Activated CD8-positive, alpha-beta T cell treated with anti-CD3 and anti-CD28 coated beads for 36 hours (primary cell): ENCODE measurements at regions of chr4 and their contacts with region 1.

Region 1: GRCh38 chr4:109433205-109434006 is at the start of gene SEC24B:
- DNase-seq: peak; percentile 92
- ATAC-seq: peak; percentile 87
- H3K4me3 Mint-ChIP-seq: peak within 1 kb of the TSS; percentile 87
- H3K27ac Mint-ChIP-seq: peak within 1 kb of the TSS; percentile 92
- H3K4me1 Mint-ChIP-seq: peaks cover 53% of the 10 kb centered on the region
- H3K27me3 Mint-ChIP-seq: no peaks in the 10 kb centered on the region
- CTCF ChIP-seq: peak; percentile 92
- total RNA-seq, gene SEC24B: 25.8 to 26.0 TPM

Region 2: DNA sequence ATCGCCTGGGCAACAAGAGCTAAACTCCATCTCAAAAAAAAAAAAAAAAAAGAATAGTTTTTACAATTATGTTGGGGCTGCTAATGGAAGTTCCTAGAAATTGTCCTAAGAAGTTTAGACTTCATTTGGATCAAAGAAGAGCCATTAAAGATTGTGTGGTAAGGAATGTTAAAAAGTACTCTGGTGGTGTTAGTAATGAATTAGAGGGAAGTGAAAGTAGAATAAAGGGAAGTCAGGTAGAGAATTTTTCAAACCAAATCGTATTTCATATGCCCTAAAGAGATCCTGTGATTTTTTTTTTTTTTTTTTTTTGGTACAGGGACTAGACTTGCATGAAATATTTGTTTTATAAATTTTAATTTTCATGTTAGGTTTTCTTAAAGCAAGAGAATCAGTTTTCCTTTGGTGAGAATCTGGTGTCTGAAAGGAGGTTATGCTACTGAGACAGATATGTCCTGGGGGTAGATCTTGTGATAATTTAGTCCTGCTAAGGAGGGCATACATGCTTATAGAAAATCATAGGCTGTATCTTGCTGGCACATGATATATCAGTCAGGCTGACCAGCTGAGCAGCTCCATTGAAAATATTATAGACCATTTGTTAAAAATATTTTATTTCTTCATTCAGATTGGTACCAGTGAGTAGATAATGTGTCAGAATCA is 10.9 kb after region 1 on chr4:
- CTCF ChIA-PET with region 1: interaction called, 13 read pairs
- POLR2A ChIA-PET with region 1: interaction called, 9 read pairs
- intact Hi-C with region 1: no loop called
- DNase-seq: no peak
- ATAC-seq: no peak
- H3K4me3 Mint-ChIP-seq: no peak overlapping the region
- H3K27ac Mint-ChIP-seq: no peak overlapping the region
- H3K4me1 Mint-ChIP-seq: peaks cover 51% of the 10 kb centered on the region
- H3K27me3 Mint-ChIP-seq: no peaks in the 10 kb centered on the region
- CTCF ChIP-seq: no peak

Region 3: GRCh38 chr4:109559983-109560686 is 126.7 kb after region 1 on chr4 and contains the start of gene MCUB:
- CTCF ChIA-PET with region 1: interaction called, 7 read pairs
- POLR2A ChIA-PET with region 1: interaction called, 10 read pairs
- intact Hi-C with region 1: no loop called
- DNase-seq: peak; percentile 95
- ATAC-seq: peak; percentile 90
- H3K4me3 Mint-ChIP-seq: peak within 1 kb of the TSS; percentile 85
- H3K27ac Mint-ChIP-seq: peak within 1 kb of the TSS; percentile 97
- H3K4me1 Mint-ChIP-seq: peaks cover 48% of the 10 kb centered on the region
- H3K27me3 Mint-ChIP-seq: no peaks in the 10 kb centered on the region
- CTCF ChIP-seq: no peak
- total RNA-seq, gene MCUB: 62.3 to 65.3 TPM

Region 4: DNA sequence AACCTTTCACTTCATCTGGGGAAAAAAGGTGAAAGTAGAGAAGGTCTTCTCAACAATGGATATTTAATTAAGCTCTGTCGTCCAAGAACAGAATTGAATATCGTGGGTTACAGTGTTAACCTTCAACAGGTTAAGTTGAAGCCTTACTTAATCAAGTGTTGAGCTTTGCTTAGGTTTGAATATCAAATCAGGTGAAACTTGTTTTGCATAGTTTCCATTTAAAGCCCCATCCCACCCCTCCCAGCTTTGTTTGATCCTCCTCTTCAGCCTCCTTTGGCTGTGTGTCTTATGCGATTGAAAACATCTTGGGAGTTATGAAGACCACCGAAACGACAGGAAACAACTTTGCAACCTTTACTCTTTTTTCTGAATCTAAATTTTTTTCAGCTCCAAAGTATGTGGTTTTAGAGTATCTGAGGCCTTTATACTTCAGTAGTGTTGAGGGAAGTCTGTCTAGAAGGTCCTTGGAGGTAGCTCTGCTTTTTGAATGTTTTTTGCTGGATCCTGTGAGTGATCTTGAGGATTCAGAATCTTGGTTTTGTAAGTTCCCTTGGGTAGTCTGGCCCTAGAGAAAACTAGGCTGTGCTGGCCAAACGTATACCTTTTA is 165.7 kb after region 1 on chr4:
- CTCF ChIA-PET with region 1: no interaction called
- POLR2A ChIA-PET with region 1: no interaction called
- intact Hi-C with region 1: no loop called
- DNase-seq: no peak
- ATAC-seq: peak; percentile 37
- H3K4me3 Mint-ChIP-seq: no peak overlapping the region
- H3K27ac Mint-ChIP-seq: peak overlapping the region; percentile 81
- H3K4me1 Mint-ChIP-seq: peaks cover 31% of the 10 kb centered on the region
- H3K27me3 Mint-ChIP-seq: no peaks in the 10 kb centered on the region
- CTCF ChIP-seq: no peak

Region 5: DNA sequence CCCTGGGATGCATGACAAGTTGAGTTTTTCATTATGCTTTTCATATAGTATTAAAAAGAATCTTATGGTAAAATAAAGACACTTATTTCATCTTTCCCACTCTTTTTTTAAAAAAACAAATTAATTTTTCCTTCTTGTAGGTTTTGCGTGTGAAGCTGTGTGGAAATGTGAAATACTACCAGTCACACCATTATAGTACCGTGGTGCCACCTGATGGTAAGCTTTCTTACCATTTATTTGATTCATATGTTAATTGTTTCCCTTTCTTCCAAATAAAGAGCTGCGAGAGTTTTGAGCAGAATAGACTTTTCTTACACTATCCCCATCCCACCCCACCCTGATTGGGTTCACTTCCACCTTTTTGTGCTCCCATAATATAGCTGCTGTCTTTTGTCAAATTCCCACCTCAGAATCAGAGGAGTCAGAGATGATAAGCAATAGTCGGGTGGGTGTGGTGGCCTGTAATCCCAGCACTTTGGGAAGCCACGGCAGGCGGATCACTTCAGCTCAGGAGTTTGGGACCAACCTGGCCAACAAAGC is 225.5 kb after region 1 on chr4:
- CTCF ChIA-PET with region 1: interaction called, 8 read pairs
- POLR2A ChIA-PET with region 1: no interaction called
- intact Hi-C with region 1: loop called (anchors 5 kb)
- DNase-seq: peak; percentile 32
- ATAC-seq: peak; percentile 41
- H3K4me3 Mint-ChIP-seq: no peak overlapping the region
- H3K27ac Mint-ChIP-seq: no peak overlapping the region
- H3K4me1 Mint-ChIP-seq: peaks cover 37% of the 10 kb centered on the region
- H3K27me3 Mint-ChIP-seq: no peaks in the 10 kb centered on the region
- CTCF ChIP-seq: peak; percentile 24

Region 6: DNA sequence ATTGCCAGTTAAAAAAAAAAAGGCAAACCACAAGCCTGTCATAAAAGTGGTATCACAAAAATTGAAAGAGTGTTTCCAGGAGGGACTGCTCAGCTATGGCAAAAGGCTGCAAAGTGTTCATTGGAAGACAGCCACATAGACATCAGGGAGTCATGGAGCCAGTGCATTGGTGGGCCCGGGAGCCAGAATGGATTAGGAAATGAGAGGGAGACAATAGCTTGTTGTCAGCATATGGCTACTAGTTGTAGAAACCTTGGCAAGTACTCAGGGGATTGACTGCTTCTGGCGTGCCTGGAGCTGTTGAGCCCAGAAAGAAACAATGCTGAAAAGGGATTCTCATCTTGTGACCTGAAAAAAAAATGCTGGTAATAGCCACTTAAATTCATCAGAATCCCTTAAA is 387.2 kb after region 1 on chr4:
- CTCF ChIA-PET with region 1: interaction called, 14 read pairs
- POLR2A ChIA-PET with region 1: interaction called, 3 read pairs
- intact Hi-C with region 1: no loop called
- DNase-seq: no peak
- ATAC-seq: no peak
- H3K4me3 Mint-ChIP-seq: no peak overlapping the region
- H3K27ac Mint-ChIP-seq: peak overlapping the region; percentile 64
- H3K4me1 Mint-ChIP-seq: peaks cover 58% of the 10 kb centered on the region
- H3K27me3 Mint-ChIP-seq: no peaks in the 10 kb centered on the region
- CTCF ChIP-seq: no peak